ENCODE measurements at regions of chr20 and their contacts with region 1.

Region 1: DNA sequence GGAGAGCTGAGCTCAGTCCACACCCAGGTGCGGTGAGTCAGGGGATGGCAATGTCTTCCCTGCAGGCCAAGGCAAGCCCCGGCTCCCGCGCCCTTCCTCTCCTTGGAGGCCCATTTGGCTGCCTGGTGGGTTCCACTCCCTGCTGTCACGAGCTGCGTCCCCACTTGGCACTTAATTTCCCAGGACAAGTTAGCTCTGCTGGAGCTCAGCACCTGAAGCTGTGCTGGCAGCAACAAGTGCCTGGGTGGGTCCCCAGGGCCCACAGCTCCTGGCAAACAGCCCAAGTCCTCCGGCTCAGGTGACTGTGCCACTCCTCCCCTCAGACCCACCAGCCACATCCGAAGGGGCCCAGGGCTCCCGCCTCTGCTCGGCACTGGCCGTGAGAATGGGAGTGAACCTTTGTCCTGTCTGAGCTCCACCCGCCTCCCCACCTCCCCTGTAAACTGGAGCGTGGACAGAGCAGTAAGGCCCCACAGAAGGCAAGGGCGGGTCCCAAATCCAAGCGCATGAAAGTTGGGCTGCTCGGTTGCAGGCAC is 17.0 kb downstream of the LAMA5 start:
- DNase-seq: peak; percentile 97 to 99
- H3K4me3 ChIP-seq: peak overlapping the region; percentile 12; the same call in 1 of the 2 replicates
- H3K27ac ChIP-seq: peak overlapping the region; percentile 87
- H3K4me1 ChIP-seq: peaks cover 55% of the 10 kb centered on the region
- H3K27me3 ChIP-seq: no peaks in the 10 kb centered on the region
- CTCF ChIP-seq: no peak

Region 2: GRCh38 chr20:62321521-62321948 is 28.6 kb before region 1 on chr20:
- CTCF ChIA-PET with region 1: no interaction called
- POLR2A ChIA-PET with region 1: interaction called, 3 read pairs
- intact Hi-C with region 1: loop called (anchors 2 kb)
- DNase-seq: peak in 1 of 2 experiments; percentile 51
- H3K4me3 ChIP-seq: no peak overlapping the region
- H3K27ac ChIP-seq: no peak overlapping the region
- H3K4me1 ChIP-seq: no peaks in the 10 kb centered on the region
- H3K27me3 ChIP-seq: no peaks in the 10 kb centered on the region
- CTCF ChIP-seq: no peak

Region 3: DNA sequence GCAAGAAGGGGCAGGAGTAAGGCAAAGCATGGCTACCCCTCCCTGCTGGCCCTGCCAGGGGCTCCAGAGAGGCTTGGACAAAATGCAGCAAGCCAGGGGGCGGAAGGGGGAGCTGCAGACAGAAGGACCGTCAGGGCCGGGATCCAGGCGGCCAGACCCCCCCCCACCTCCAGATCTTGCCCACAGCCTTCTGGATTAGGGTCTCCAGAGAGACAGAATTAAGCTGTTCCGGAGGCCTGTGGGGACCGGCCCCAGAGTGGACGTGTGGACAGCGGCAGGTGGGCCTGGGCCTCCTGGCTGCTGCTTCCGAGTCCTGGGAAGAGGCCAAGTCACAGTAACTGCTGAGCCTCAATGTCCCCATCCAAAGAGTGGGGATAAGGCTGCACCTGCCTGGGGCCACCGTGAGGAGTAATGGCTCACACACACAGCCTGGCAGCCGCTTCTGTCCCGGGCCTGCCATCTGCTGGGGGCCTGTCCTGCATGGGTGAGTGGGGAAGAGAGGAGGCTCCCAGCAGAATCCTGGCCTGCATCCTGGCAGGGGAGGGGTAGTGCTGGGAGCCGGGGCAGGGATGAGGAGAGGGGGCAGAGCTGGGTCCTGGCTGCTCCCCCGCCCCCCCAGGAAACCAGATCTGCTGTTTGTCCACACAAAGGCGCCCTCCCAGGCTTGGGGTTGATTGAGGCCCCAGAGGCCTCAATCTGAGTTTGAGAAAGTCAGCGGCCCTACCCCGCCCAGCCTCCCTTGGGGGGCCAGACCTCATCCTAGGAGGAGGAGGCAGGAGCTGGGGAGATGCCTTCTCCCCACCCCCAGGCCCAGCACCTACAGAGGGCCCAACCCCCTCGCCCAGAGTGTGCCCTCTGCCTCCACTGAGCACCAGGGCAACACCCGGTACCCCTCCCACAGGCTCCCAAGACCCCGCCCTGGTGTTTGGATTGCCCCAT is 13.1 kb after region 1 on chr20:
- CTCF ChIA-PET with region 1: interaction called, 18 read pairs
- POLR2A ChIA-PET with region 1: interaction called, 41 read pairs
- intact Hi-C with region 1: loop called (anchors 1 kb)
- DNase-seq: peak in 1 of 2 experiments; percentile 62
- H3K4me3 ChIP-seq: peak overlapping the region; percentile 78
- H3K27ac ChIP-seq: peak overlapping the region; percentile 92
- H3K4me1 ChIP-seq: peaks cover 62% of the 10 kb centered on the region
- H3K27me3 ChIP-seq: no peaks in the 10 kb centered on the region
- CTCF ChIP-seq: no peak

Region 4: DNA sequence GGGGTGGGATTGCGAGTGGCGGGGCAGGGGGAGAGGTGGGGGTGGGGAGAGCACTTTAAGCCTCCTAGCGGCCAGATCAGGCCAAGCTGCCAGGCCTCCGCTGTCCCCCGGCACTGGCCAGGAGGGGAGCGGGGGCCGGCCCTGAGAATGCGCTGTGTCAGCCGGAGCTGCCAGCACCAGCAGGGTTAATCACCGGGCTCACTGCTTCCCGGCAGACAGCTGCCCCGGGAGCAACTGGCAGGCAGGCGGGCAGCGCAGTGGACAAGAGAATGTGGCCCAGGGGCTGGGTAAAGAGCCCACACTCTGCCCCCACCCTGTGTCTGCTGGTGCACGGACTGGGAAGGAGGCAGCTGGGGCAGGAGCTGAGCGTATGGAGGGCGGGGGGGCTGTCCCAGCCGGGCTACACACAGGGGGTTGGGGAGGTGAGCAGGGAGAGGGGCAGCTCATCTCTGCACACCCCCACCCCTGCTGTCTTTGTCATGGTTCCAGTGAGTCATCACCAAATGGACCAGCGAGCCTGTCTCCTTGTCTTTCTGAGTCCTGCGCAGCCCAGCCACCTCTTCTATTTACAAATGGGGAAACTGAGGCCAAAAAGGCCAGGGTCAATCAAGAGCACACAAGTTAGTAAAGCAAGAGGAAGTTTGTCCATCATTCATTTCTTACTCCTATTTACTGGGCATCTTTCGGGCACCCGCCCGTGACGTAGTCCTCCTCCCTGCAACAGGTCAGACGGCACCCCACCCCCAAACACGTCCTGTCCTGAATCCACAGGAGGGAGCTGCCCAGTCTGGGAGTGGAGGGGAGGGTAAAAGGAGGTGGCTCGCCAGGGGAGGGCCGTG is 19.0 kb after region 1 on chr20:
- CTCF ChIA-PET with region 1: interaction called, 6 read pairs
- POLR2A ChIA-PET with region 1: interaction called, 41 read pairs
- intact Hi-C with region 1: loop called (anchors 1 kb)
- DNase-seq: peak; percentile 53 to 79
- H3K4me3 ChIP-seq: peak overlapping the region; percentile 58; the same call in 1 of the 2 replicates
- H3K27ac ChIP-seq: peak overlapping the region; percentile 35; the same call in 1 of the 2 replicates
- H3K4me1 ChIP-seq: peaks cover 44% of the 10 kb centered on the region
- H3K27me3 ChIP-seq: no peaks in the 10 kb centered on the region
- CTCF ChIP-seq: peak; percentile 23; the same call in 1 of the 2 replicates

Region 5: DNA sequence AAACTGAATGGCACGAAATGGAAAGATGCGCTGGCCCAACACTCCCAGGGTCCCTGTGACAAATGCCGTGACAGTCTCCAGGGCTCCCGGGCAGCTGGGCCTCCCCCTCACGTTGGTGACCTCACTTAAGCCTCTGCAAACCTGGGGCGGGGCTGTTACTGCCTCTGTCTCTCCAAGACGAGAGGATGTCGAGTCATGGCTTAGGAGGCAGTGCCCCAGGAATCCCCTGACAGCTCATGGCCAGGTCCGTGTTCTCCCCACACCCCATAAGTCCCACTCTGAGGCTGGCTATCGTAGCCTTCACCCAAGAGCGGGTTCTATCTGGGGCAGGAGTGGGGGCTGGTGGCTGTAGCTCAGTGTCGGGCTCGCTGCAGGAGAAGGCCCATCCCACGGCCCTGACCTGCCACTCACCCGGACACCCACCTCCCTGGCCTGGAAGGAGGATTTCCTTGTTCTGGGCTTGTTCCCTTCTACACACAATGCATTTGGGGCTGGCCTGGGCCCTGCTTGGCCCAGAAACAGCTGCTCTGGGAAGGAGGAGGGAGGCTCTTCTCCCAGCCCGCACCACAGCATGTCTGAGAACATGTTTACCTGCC is 31.1 kb after region 1 on chr20:
- CTCF ChIA-PET with region 1: interaction called, 17 read pairs
- POLR2A ChIA-PET with region 1: interaction called, 10 read pairs
- intact Hi-C with region 1: loop called (anchors 1 kb)
- DNase-seq: peak in 1 of 2 experiments; percentile 72
- H3K4me3 ChIP-seq: no peak overlapping the region
- H3K27ac ChIP-seq: peak overlapping the region; percentile 42
- H3K4me1 ChIP-seq: peaks cover 25% of the 10 kb centered on the region
- H3K27me3 ChIP-seq: no peaks in the 10 kb centered on the region
- CTCF ChIP-seq: no peak

Region 6: DNA sequence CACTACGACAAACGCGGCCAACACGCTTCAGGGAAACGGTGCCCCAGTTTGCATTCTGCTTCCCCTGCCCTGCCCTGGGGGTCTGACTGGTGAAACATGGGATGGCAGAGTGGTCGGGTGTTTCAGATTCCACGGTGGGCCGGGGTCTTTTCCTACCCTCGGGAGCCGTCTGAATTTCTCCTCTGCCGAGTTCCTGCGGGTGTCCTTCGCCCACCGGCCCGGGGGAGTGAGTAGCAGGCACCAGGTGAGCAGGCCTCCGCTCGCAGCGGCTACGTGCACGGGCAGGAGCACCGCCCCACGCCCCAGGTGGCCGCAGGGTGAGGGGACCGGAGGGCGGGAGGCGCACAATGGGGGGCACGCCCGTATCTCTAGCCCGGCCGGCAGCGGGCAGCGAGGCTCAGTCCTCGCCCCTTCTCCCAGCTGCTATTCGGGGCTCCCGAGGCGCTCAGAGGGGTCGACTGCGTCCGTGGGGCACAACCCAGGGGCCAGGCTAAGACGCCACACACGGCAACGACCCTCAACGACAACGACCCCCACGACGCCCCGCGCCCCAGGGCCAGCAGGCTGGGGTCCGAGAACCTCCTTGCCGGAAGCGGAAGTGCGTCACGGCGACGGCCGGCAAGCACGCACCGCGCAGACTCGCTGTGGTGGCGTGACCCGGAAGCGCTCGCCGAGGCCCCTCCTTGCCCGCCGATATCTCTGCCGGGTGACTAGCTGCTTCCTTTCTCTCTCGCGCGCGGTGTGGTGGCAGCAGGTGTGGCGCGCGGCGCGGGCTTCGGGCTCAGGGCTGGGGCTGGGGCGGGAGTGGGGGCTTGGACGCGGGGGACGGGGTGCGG is 36.4 kb after region 1 on chr20 and contains the start of gene RPS21:
- CTCF ChIA-PET with region 1: interaction called, 17 read pairs
- POLR2A ChIA-PET with region 1: interaction called, 21 read pairs
- intact Hi-C with region 1: loop called (anchors 1 kb)
- DNase-seq: peak; percentile 85 to 93
- H3K4me3 ChIP-seq: peak within 1 kb of the TSS; percentile 100
- H3K27ac ChIP-seq: peak within 1 kb of the TSS; percentile 36
- H3K4me1 ChIP-seq: peaks cover 23% of the 10 kb centered on the region
- H3K27me3 ChIP-seq: no peaks in the 10 kb centered on the region
- CTCF ChIP-seq: no peak
- total RNA-seq, gene RPS21: 2,188 and 2,275 TPM in 2 replicates

Measured in PC-9 (cell line).